HEK293 (cell line): ENCODE measurements at regions of chr17 and their contacts with region 1.

Region 1: DNA sequence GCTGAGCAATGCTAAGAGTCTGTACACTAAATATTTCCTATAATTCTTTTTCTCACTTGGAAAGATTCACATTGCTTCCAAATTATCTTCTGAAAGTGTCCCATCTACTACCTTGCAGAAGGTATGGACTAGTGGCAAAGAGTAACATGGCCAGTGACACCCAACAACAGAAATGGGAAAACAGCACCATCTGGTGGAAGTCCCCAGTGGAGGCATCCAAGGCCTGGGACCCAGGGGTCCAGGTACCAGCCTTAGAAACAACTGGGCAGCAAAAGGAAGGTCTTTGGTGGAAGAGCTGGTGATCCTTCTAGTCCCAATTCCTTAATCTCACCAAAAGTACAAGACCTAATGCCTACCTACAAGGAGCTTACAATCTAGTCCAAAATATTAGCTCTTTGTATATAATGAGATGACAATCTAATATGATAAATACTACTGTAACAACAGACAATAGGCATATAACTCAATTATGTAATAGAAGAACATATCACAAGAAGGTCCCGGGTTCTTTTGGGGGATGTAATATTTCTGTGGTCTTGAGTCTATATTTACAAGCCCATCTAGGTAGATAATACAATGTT is 55.3 kb downstream of the SKAP1 start:
- H3K4me3 ChIP-seq: no peak overlapping the region
- H3K27ac ChIP-seq: no peak overlapping the region
- H3K4me1 ChIP-seq: no peaks in the 10 kb centered on the region
- CTCF ChIP-seq: no peak

Region 2: DNA sequence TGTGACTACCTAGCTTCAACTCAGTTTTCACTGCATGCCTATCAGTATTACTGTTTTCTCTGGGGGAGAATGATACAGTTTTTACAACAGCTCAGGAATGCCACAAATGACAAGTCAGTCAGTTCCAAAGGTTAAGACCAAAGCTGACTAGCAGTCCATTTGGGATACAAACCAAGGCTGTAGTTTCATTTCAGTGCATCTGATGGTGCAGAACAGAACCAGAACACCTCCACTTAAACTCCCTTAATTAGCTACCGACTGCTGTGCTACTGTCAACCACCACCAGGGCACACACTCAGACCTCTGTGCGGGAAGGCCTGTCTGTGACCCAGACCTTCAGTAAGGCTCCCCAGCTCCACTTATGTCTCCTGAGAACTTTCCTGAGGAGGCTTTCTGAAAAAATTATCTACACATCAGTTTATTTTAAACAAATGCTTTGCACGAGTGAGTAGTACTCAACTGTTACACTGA is 306.2 kb before region 1 on chr17:
- CTCF ChIA-PET with region 1: no interaction called
- POLR2A ChIA-PET with region 1: no interaction called
- H3K4me3 ChIP-seq: no peak overlapping the region
- H3K27ac ChIP-seq: 0 out of 2 replicates have a peak overlapping the region, but pooled peaks have one; percentile 26
- H3K4me1 ChIP-seq: no peaks in the 10 kb centered on the region
- CTCF ChIP-seq: no peak

Region 3: DNA sequence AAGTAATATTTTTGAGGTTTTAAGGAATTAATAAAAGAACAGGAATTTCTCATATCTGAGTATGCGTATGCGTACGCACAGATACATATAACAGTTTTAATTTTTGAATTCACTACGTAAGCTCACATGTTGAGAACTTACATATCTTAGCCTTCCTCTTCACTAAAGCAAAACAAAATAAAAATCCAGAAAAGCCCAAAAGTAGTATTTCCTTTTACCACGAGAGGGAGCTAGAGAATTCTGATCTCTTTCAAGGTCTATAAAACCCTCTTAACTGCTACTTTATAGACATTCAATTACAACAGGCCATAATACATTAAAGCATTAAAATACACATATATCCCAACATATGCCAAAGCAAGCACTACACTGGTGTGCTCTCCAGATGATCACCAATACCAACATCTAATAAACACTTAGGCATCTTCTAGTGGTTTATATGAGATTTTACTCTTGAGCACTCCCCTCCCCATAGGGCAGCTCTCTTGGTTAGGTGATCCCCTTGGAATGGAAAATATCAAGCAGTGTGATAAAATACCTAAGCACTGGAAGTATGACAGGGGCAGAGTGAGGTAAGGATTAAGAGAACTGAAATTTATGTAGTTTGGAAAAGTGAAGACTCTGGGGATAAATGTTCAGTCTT is 38.8 kb before region 1 on chr17:
- CTCF ChIA-PET with region 1: interaction called, 24 read pairs
- POLR2A ChIA-PET with region 1: no interaction called
- H3K4me3 ChIP-seq: no peak overlapping the region
- H3K27ac ChIP-seq: no peak overlapping the region
- H3K4me1 ChIP-seq: peaks cover 15% of the 10 kb centered on the region; the same call in 1 of the 2 replicates
- CTCF ChIP-seq: no peak

Region 4: GRCh38 chr17:48357779-48358602 is 16.7 kb before region 1 on chr17:
- CTCF ChIA-PET with region 1: interaction called, 44 read pairs
- POLR2A ChIA-PET with region 1: no interaction called
- H3K4me3 ChIP-seq: no peak overlapping the region
- H3K27ac ChIP-seq: no peak overlapping the region
- H3K4me1 ChIP-seq: no peaks in the 10 kb centered on the region
- CTCF ChIP-seq: no peak

Region 5: DNA sequence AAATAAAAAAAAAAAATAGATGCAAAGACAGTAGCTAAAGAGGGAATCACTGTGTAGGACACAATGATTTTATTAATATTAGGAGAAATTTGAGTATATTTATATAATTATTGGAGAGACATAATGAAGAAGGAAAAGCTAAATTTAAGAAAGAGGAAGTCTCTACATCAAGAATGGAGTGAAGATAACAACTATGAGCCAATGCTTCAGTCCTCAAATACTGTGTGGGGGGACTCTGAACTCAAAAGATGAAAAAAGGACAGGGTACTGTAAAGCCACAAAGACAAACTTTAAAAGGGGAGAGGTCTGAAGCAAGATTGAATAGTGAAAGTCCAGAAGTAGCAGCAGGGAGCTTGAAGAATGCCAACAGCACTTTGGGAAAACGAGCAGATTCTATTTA is 10.6 kb after region 1 on chr17:
- CTCF ChIA-PET with region 1: interaction called, 22 read pairs
- POLR2A ChIA-PET with region 1: no interaction called
- H3K4me3 ChIP-seq: no peak overlapping the region
- H3K27ac ChIP-seq: no peak overlapping the region
- H3K4me1 ChIP-seq: peaks cover 15% of the 10 kb centered on the region
- CTCF ChIP-seq: no peak

Region 6: GRCh38 chr17:48586355-48587258 is 211.9 kb after region 1 on chr17:
- CTCF ChIA-PET with region 1: interaction called, 13 read pairs
- POLR2A ChIA-PET with region 1: no interaction called
- H3K4me3 ChIP-seq: peak overlapping the region; percentile 38
- H3K27ac ChIP-seq: peak overlapping the region; percentile 92
- H3K4me1 ChIP-seq: peaks cover 50% of the 10 kb centered on the region
- CTCF ChIP-seq: no peak

Region 7: DNA sequence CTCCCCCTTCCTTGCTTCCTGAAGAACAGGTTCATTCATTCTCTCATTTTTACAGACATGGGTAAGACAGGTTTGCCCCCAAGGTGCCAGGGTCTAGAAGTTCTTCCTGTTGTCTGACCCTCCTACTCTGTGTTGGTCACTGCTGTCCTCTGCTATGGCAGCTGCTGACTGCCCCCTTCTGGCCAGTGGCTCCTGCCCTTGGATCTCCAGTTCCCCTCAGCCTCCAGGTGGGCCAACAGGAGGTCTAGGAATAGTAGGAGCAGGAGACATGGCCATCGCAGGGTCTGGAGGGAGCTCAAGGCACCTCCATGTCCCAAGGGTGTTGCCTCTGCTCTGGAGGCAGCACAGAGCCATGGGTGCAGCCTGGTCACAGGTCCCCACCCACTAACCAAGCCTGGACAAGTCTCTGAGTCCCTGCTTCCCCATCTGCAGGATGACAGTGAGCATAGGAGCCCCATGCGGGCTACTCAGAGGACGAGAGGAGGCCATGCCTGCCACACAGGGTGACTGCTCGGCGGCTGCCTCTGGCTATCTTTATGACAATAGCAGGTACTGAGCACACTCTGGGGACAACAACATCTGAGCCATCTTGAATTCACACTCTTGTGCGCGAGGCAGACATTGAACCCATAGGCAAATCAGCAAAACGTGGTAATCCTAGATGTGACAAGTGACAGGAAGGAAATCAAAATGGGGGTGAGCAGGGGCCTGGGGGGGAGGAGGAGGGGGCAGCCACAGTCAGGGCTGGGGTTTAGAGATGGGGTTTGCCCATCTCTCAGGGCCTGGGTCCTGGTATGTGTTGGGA is 1174.0 kb after region 1 on chr17:
- CTCF ChIA-PET with region 1: no interaction called
- POLR2A ChIA-PET with region 1: no interaction called
- H3K4me3 ChIP-seq: no peak overlapping the region
- H3K27ac ChIP-seq: no peak overlapping the region
- H3K4me1 ChIP-seq: no peaks in the 10 kb centered on the region
- CTCF ChIP-seq: peak; percentile 66